Naive thymus-derived CD8-positive, alpha-beta T cell (primary cell): ENCODE measurements at regions of chr19 and their contacts with region 1.

Region 1: DNA sequence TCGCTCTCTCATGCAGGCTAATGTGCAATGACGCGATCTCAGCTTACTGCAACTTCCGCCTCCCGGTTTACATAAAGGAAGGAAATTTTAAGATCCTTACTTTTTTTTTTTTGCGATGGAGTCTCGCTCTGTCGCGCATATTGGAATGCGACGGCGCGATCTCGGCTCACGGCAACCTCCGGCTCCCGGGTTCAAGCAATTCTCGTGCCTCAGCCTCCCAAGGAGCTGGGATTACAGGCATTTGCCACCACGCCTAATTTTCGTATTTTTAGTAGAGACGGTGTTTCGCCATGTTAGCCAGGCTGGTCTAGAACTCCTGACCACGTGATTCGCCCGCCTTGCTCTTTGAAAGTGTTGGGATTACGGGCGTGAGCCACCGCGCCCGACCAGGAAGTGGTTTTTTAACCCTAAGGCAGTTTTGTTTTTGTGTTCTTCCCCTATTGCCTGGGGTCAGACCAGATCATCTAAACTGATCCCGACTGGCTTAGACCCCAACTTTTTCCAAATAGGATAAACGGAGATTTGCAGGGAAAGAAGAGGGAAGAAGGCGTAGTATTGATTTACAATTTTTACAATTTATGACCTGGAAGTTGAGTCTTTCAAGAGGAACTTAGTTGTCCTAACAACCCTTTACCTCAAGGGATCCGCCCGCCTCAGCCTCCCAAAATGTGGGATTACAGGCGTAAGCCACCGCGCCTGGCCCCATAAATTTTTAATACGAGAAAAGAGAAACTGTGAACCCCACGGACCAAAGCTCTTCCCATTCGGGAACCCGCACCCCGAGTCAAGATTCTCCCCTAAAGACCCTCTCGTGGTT is 142.0 kb downstream of the ZNF737 start:
- DNase-seq: peak in 4 of 10 donors; percentile 2 to 38 (median 26)
- ATAC-seq: no peak
- H3K4me3 Mint-ChIP-seq: peak overlapping the region; percentile 89 to 97 (median 94)
- H3K27ac Mint-ChIP-seq: peak overlapping the region; percentile 68 to 97 (median 92)
- H3K4me1 Mint-ChIP-seq: peaks cover 2 to 11% (median 7%) of the 10 kb centered on the region in 4 donors
- H3K27me3 Mint-ChIP-seq: peaks cover 0 to 3% (median 0%) of the 10 kb centered on the region in 5 donors

Region 2: DNA sequence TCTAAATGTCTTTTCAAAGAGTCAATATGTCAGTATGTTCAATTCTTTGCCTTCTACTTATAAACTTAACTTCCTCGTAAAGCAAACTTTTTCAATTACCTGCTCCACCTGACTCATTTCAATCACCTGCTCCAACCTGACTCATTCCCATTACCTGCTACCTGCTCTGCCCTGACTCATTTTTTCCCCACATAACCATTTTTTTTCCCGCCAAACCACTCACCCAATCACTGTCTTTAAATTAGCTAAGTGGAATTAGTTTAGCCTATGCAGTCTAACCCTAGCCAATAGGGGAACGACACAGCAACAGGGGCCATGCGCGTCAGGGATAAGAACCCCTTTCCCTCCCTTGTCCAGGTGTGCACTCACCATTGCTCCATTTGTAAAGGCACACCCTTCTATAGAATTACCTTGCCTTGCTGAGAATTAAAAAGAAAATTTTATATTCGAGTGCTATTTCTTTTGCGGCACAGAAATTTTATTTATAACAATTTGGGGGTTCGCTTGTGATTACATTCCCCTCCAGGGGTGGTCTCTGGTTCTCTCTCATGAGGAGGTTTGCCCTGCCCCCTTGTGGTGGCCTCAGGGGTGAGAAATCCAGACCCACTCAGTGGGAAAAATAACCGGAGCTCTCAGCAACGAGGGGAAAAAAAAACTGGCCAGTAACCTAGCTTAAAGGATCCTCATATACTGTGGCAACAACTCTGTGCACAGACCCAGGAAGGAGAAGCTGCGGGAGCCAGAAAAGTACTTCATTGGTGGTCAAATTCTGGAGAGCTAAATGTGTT is 63.5 kb before region 1 on chr19:
- POLR2A ChIA-PET with region 1: no interaction called
- DNase-seq: no peak
- ATAC-seq: no peak
- H3K4me3 Mint-ChIP-seq: no peak overlapping the region
- H3K27ac Mint-ChIP-seq: no peak overlapping the region
- H3K4me1 Mint-ChIP-seq: peaks cover 0 to 6% (median 0%) of the 10 kb centered on the region in 4 donors
- H3K27me3 Mint-ChIP-seq: peaks cover 0 to 10% (median 0%) of the 10 kb centered on the region in 5 donors

Region 3: GRCh38 chr19:20470345-20471134 is 47.0 kb after region 1 on chr19:
- POLR2A ChIA-PET with region 1: no interaction called
- DNase-seq: no peak
- ATAC-seq: no peak
- H3K4me3 Mint-ChIP-seq: no peak overlapping the region
- H3K27ac Mint-ChIP-seq: no peak overlapping the region
- H3K4me1 Mint-ChIP-seq: no peaks in the 10 kb centered on the region
- H3K27me3 Mint-ChIP-seq: peaks cover 0 to 2% (median 0%) of the 10 kb centered on the region in 5 donors

Region 4: GRCh38 chr19:20482721-20483120 is 59.1 kb after region 1 on chr19:
- POLR2A ChIA-PET with region 1: no interaction called
- DNase-seq: peak in 3 of 10 donors; percentile 1 to 14 (median 7)
- ATAC-seq: no peak
- H3K4me3 Mint-ChIP-seq: peak overlapping the region in 1 of 10 donors; percentile 4
- H3K27ac Mint-ChIP-seq: no peak overlapping the region
- H3K4me1 Mint-ChIP-seq: peaks cover 0 to 4% (median under 1%) of the 10 kb centered on the region in 4 donors
- H3K27me3 Mint-ChIP-seq: peaks cover 0 to 3% (median 0%) of the 10 kb centered on the region in 5 donors

Region 5: GRCh38 chr19:20503476-20503875 is 79.9 kb after region 1 on chr19:
- POLR2A ChIA-PET with region 1: no interaction called
- DNase-seq: no peak
- ATAC-seq: no peak
- H3K4me3 Mint-ChIP-seq: no peak overlapping the region
- H3K27ac Mint-ChIP-seq: no peak overlapping the region
- H3K4me1 Mint-ChIP-seq: no peaks in the 10 kb centered on the region
- H3K27me3 Mint-ChIP-seq: no peaks in the 10 kb centered on the region

Region 6: DNA sequence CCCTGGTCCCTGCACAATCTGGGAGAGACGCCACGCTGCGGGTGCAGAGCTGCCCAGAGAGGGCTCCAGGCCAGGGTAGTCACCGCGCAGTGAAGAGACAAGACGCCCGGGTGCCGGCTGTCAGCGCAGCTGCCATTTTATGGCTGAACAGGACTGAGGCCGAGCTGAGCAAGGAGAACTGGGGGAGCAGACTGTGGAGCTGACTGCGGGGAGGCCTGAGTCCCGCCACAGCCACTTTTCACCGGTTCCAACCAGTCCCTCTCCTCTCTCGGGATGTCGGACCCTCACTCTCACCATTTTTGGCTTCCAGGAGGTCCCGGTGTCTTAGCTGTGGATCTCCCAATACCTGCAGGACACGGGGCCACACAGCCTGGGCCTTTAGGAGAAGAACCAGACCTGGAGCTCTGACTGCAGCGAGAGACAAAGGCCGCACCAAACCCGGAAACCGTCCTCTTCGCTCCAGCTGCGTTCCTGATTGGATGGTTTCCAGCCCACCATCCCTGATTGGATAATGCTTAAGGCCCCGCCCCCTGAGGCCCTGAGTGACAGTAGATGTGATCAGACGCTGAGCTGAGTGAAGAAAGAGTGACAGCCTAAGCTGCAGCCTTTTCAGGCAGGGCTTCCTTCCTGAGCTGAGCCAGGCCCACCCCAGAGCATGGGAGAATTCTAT is 237.7 kb after region 1 on chr19 and contains the start of gene ZNF626:
- POLR2A ChIA-PET with region 1: interaction called, 12 read pairs
- DNase-seq: peak; percentile 73 to 98 (median 90)
- ATAC-seq: peak; percentile 97 to 98
- H3K4me3 Mint-ChIP-seq: peak within 1 kb of the TSS; percentile 92 to 97 (median 94)
- H3K27ac Mint-ChIP-seq: peak within 1 kb of the TSS; percentile 94 to 98 (median 97)
- H3K4me1 Mint-ChIP-seq: peaks cover 12 to 50% (median 31%) of the 10 kb centered on the region in 4 donors
- H3K27me3 Mint-ChIP-seq: no peaks in the 10 kb centered on the region
- polyA plus RNA-seq, gene ZNF626: 4.8 to 13.7 (median 8.8) TPM